Heart right ventricle (tissue), 16 donors: ENCODE measurements at regions of chr6 and their contacts with region 1.

Region 1: DNA sequence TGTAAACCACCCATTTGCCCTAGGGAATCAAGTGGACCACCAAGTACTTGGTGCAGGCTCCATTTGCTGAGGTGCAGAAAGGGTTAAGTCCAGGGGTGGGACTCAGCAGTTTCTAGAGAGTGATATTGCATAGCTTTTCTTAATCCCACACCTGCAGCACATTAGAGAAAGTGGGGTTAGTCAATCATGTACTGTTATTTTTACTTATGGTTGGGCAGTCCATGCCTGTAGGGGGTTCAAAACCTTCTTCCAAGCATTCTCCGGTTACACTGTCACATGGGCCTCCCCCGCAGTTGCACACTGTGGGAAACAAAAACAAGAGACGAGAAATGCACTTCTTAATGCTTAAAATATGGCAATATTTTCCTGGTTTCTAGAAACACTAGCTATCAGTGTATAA is 65.5 kb downstream of the LAMA4 start:
- DNase-seq: no peak
- ATAC-seq: no peak
- H3K4me3 ChIP-seq: no peak overlapping the region
- H3K27ac ChIP-seq: peak overlapping the region in 3 of 10 donors; percentile 1 to 39 (median 22)
- H3K4me1 ChIP-seq: peaks cover 5 to 34% (median 15%) of the 10 kb centered on the region in 9 donors
- H3K27me3 ChIP-seq: no peaks in the 10 kb centered on the region
- CTCF ChIP-seq: no peak

Region 2: DNA sequence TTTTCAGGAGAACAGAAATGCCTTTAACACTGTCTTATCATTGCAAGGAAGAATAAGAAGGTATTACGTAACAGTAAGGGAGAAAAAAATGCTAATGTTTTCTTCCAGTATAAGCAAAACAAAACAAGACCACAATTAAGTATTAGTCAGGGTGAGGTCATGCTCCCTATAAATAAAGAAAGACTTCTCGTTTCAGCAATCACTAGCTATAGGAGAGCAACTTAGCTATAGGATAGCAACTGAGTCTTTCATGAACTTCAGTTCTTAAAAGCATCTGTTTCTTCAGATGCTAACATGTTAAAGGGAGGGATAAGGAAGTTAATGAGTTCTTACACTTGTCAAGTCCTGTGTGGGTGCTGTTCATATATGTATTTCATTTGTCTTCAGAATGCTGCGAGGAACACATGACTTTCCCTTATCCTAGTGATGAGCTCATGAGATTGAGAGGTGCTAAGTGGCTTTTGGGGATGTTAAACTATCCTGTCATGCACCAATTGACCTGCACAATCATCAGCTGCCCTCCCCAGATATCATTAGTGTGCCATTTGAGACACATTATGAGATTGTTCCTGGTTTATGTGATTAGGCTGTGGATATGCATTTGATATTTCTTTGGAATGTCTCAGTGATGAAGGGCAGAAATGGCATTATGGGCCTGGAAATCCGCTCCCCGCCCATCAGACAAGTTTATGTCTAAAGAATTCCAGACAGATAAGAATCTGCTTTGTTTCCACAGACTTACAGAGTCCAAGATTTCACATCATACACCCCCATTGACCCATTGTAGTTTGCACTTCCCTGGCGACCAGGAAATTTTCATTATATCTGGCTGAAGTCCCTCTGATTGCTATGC is 28.0 kb after region 1 on chr6:
- intact Hi-C with region 1: loop called in 1 of 10 experiments (anchors 2 kb)
- DNase-seq: no peak
- ATAC-seq: peak in 6 of 8 donors; percentile 25 to 67 (median 51)
- H3K4me3 ChIP-seq: no peak overlapping the region
- H3K27ac ChIP-seq: peak overlapping the region in 9 of 10 donors; percentile 24 to 86 (median 58)
- H3K4me1 ChIP-seq: peaks cover 9 to 91% (median 78%) of the 10 kb centered on the region in 9 donors
- H3K27me3 ChIP-seq: no peaks in the 10 kb centered on the region
- CTCF ChIP-seq: no peak

Region 3: GRCh38 chr6:112269114-112269513 is 80.2 kb after region 1 on chr6:
- intact Hi-C with region 1: loop called in 2 of 10 experiments (anchors 5 to 10 kb)
- DNase-seq: peak in 1 of 2 donors; percentile 28
- ATAC-seq: peak; percentile 30 to 84 (median 72)
- H3K4me3 ChIP-seq: no peak overlapping the region
- H3K27ac ChIP-seq: peak overlapping the region in 9 of 10 donors; percentile 63 to 85 (median 69)
- H3K4me1 ChIP-seq: peaks cover 3 to 39% (median 22%) of the 10 kb centered on the region in 9 donors
- H3K27me3 ChIP-seq: no peaks in the 10 kb centered on the region
- CTCF ChIP-seq: peak in 7 of 9 donors; percentile 18 to 63 (median 43)

Region 4: GRCh38 chr6:112282221-112282620 is 93.3 kb after region 1 on chr6:
- intact Hi-C with region 1: loop called in 5 of 10 experiments (anchors 5 to 10 kb)
- DNase-seq: peak; percentile 46 to 77
- ATAC-seq: peak; percentile 90 to 94 (median 93)
- H3K4me3 ChIP-seq: no peak overlapping the region
- H3K27ac ChIP-seq: peak overlapping the region in 8 of 10 donors; percentile 18 to 65 (median 52)
- H3K4me1 ChIP-seq: peaks cover 0 to 68% (median 40%) of the 10 kb centered on the region in 9 donors
- H3K27me3 ChIP-seq: no peaks in the 10 kb centered on the region
- CTCF ChIP-seq: peak; percentile 19 to 73 (median 48)

Region 5: DNA sequence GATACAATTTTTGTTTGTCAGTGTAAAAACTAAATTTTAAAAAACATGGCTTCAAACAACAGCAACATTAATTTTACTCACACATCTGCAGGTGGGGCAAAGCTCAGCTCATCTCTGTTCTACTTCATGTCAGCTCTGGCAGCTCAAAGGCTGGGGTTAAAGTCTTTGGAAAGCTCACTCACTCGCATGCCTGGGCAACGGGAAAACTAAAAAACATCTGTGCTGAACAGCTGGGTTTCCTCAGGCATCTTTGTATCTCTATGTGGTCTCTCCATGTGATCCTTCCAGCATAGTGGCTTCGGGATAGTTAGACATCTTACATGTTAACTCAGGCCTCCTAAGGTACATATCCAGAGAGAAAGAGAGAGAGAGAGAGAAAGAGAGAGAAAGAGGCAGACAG is 657.8 kb after region 1 on chr6:
- intact Hi-C with region 1: no loop called
- DNase-seq: peak in 1 of 2 donors; percentile 5
- ATAC-seq: peak in 1 of 8 donors; percentile 27
- H3K4me3 ChIP-seq: no peak overlapping the region
- H3K27ac ChIP-seq: no peak overlapping the region
- H3K4me1 ChIP-seq: no peaks in the 10 kb centered on the region
- H3K27me3 ChIP-seq: no peaks in the 10 kb centered on the region
- CTCF ChIP-seq: no peak